Aorta (tissue), 5 donors: ENCODE measurements at regions of chr11 and their contacts with region 1.

Region 1: GRCh38 chr11:14300661-14301304 is 58.2 kb downstream of the RRAS2 start:
- DNase-seq: peak in 1 of 2 donors; percentile 48
- ATAC-seq: peak; percentile 92
- H3K4me3 ChIP-seq: no peak overlapping the region
- H3K27ac ChIP-seq: no peak overlapping the region
- H3K4me1 ChIP-seq: no peaks in the 10 kb centered on the region
- H3K27me3 ChIP-seq: no peaks in the 10 kb centered on the region

Region 2: DNA sequence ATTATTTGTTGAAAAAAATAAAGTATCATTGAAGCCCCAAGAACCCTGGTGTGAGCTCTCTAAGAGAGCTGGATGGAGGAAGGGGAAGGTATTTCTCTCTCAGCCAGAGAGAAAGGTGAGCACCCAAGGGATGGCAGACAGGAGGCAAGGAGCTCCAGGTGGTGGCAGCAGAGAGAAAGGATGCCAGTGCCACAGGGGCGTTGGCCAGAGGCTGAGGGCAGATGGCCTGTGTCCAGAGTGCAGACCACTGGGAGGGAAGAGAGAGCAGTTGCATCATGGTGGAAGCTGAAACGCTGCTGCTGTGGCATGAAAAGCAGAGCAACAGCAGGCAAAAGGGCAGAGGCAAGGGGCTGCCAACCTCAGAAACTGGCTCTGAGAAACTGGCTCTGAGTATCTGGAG is 329.8 kb before region 1 on chr11:
- intact Hi-C with region 1: no loop called
- DNase-seq: peak in 1 of 2 donors; percentile 52
- ATAC-seq: no peak
- H3K4me3 ChIP-seq: no peak overlapping the region
- H3K27ac ChIP-seq: peak overlapping the region in 1 of 2 donors; percentile 36
- H3K4me1 ChIP-seq: peaks cover 0 to 11% of the 10 kb centered on the region in 2 donors
- H3K27me3 ChIP-seq: no peaks in the 10 kb centered on the region

Region 3: GRCh38 chr11:14249121-14249963 is 51.4 kb before region 1 on chr11:
- intact Hi-C with region 1: no loop called
- DNase-seq: peak; percentile 64 to 87
- ATAC-seq: peak; percentile 62
- H3K4me3 ChIP-seq: no peak overlapping the region
- H3K27ac ChIP-seq: no peak overlapping the region
- H3K4me1 ChIP-seq: no peaks in the 10 kb centered on the region
- H3K27me3 ChIP-seq: no peaks in the 10 kb centered on the region

Region 4: GRCh38 chr11:14342906-14343305 is 42.1 kb after region 1 on chr11:
- intact Hi-C with region 1: no loop called
- DNase-seq: no peak
- ATAC-seq: no peak
- H3K4me3 ChIP-seq: no peak overlapping the region
- H3K27ac ChIP-seq: no peak overlapping the region
- H3K4me1 ChIP-seq: no peaks in the 10 kb centered on the region
- H3K27me3 ChIP-seq: no peaks in the 10 kb centered on the region

Region 5: GRCh38 chr11:14358729-14359439 is 58.1 kb after region 1 on chr11 and contains the start of gene RRAS2:
- intact Hi-C with region 1: loop called in 1 of 2 experiments (anchors 5 kb)
- DNase-seq: peak; percentile 75 to 92
- ATAC-seq: peak; percentile 87
- H3K4me3 ChIP-seq: peak within 1 kb of the TSS; percentile 96 to 98
- H3K27ac ChIP-seq: peak within 1 kb of the TSS; percentile 73 to 84
- H3K4me1 ChIP-seq: no peaks in the 10 kb centered on the region
- H3K27me3 ChIP-seq: no peaks in the 10 kb centered on the region
- total RNA-seq, gene RRAS2: 24.5 to 46.7 TPM

Region 6: GRCh38 chr11:14454861-14455632 is 154.3 kb after region 1 on chr11:
- intact Hi-C with region 1: loop called (anchors 2 kb)
- DNase-seq: no peak
- ATAC-seq: peak; percentile 72
- H3K4me3 ChIP-seq: no peak overlapping the region
- H3K27ac ChIP-seq: no peak overlapping the region
- H3K4me1 ChIP-seq: peaks cover 0 to 2% of the 10 kb centered on the region in 2 donors
- H3K27me3 ChIP-seq: no peaks in the 10 kb centered on the region